Gastrocnemius medialis (tissue), 4 donors: ENCODE measurements at regions of chr6 and their contacts with region 1.

Region 1: DNA sequence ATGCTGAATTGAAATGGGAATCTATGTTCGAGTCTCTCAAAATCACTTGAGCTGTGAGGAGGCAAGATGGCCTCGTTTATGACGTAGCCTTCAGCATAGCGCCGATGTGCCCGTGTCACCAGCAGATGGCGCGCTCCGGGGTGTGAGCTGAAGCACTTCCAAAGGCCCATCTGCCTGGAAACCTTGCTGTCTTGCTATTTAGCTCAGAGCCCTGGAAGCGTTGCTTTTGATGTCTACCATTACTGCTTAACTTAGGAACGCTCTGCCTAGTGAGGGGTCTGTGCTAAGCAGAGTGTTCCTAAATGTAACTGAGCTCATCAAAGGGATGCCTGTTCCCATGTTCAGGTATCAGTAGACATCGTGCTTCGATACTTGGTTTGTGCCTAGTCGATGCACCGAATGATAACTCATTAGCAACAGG is 67.7 kb downstream of the SYCP2L start:
- DNase-seq: peak in 1 of 2 donors; percentile 12
- ATAC-seq: no peak
- H3K4me3 ChIP-seq: no peak overlapping the region
- H3K27ac ChIP-seq: no peak overlapping the region
- H3K4me1 ChIP-seq: no peaks in the 10 kb centered on the region
- H3K27me3 ChIP-seq: no peaks in the 10 kb centered on the region
- CTCF ChIP-seq: peak in 4 of 5 experiments; percentile 16 to 52 (median 44)
- POLR2A ChIP-seq: no peak

Region 2: DNA sequence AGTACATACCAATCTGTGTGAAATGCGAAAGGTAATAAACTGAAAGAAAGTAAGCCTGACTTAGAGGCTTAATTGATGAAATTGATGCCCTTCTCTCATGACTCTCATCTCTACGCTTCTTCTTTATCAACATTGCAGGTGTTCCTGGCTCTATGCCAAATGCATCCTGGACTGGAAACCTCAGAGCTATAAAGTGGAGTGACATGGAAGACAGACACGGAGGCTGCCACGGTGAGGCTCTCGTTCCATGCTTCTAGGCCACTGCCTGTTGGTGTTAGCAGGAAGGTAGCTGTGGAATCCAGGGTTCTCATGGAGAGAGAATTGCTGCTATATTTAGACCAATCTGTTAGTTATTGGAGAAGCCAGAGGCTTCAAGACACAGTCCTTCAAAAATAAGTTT is 333.4 kb before region 1 on chr6:
- in situ Hi-C with region 1: no loop called
- intact Hi-C with region 1: no loop called
- DNase-seq: no peak
- ATAC-seq: no peak
- H3K4me3 ChIP-seq: no peak overlapping the region
- H3K27ac ChIP-seq: no peak overlapping the region
- H3K4me1 ChIP-seq: no peaks in the 10 kb centered on the region
- H3K27me3 ChIP-seq: no peaks in the 10 kb centered on the region
- CTCF ChIP-seq: no peak
- POLR2A ChIP-seq: no peak

Region 3: GRCh38 chr6:10908228-10908627 is 46.4 kb before region 1 on chr6:
- in situ Hi-C with region 1: no loop called
- intact Hi-C with region 1: no loop called
- DNase-seq: no peak
- ATAC-seq: no peak
- H3K4me3 ChIP-seq: no peak overlapping the region
- H3K27ac ChIP-seq: no peak overlapping the region
- H3K4me1 ChIP-seq: no peaks in the 10 kb centered on the region
- H3K27me3 ChIP-seq: no peaks in the 10 kb centered on the region
- CTCF ChIP-seq: no peak
- POLR2A ChIP-seq: no peak

Region 4: GRCh38 chr6:11064836-11065235 is 110.2 kb after region 1 on chr6:
- in situ Hi-C with region 1: loop called in 1 of 4 experiments (anchors 5 kb)
- intact Hi-C with region 1: loop called (anchors 5 kb)
- DNase-seq: no peak
- ATAC-seq: no peak
- H3K4me3 ChIP-seq: no peak overlapping the region
- H3K27ac ChIP-seq: no peak overlapping the region
- H3K4me1 ChIP-seq: no peaks in the 10 kb centered on the region
- H3K27me3 ChIP-seq: no peaks in the 10 kb centered on the region
- CTCF ChIP-seq: no peak
- POLR2A ChIP-seq: no peak